ENCODE measurements at regions of chr1 and their contacts with region 1.

Region 1: GRCh38 chr1:23559136-23559984 is at the start of gene ID3:
- DNase-seq: peak; percentile 78 to 96
- H3K4me3 ChIP-seq: peak within 1 kb of the TSS; percentile 66 to 98 (median 94)
- H3K27ac ChIP-seq: peak within 1 kb of the TSS; percentile 64
- H3K4me1 ChIP-seq: peaks cover 22 to 36% (median 27%) of the 10 kb centered on the region in 4 experiments
- H3K27me3 ChIP-seq: peaks cover 0 to 4% (median 0%) of the 10 kb centered on the region in 4 experiments; a peak in 2 of 7 replicates
- CTCF ChIP-seq: no peak
- EP300 ChIP-seq: no peak; a peak in 1 of 3 replicates
- POLR2A ChIP-seq: peak; percentile 96 to 97
- RAD21 ChIP-seq: no peak; a peak in 1 of 4 replicates
- total RNA-seq, gene ID3: 240 and 252 TPM in 2 replicates

Region 2: GRCh38 chr1:23571465-23571864 is 12.1 kb after region 1 on chr1:
- CTCF ChIA-PET with region 1: interaction called, 18 read pairs
- POLR2A ChIA-PET with region 1: interaction called, 283 read pairs
- DNase-seq: no peak
- H3K4me3 ChIP-seq: no peak overlapping the region
- H3K27ac ChIP-seq: no peak overlapping the region
- H3K4me1 ChIP-seq: peaks cover 5 to 15% (median 9%) of the 10 kb centered on the region in 4 experiments
- H3K27me3 ChIP-seq: peaks cover 0 to 5% (median 0%) of the 10 kb centered on the region in 4 experiments; a peak in 3 of 7 replicates
- CTCF ChIP-seq: no peak
- EP300 ChIP-seq: no peak
- POLR2A ChIP-seq: no peak
- RAD21 ChIP-seq: no peak

Region 3: DNA sequence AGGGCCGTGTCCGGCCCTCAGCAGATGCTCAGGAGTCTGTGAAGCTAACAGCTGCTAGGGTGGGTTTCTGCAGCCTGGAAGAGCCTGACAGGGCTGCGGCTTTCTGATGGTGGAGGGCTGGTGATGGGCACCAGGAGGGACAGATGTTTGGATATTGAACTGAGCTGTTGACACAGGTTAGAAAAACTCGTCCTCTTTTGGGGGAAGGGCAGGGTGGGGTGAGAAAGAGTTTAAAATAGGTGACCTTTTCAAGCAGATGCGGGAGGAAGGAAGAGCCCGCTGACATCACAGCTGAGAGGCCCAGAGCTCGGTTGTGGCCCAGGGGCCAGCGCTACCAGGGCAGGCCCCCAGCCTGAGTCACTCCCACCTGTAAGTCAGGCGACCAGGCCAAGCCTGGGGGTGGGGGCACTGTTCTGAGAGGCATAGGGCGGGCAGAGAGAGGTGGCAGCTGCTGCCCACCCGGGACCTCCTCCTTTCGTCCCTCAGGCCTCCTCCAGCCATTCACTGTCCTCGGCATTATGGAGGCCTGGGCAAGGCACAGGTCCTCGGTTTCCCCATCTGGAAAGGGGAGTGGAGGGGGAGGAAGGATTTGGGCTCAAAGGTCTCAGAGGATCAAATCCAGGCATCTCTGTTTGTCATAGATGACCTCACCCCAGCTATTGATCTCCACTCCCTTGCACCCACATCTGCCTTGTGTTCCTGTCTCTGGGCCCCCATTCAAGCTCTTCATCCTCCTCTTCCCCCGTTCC is 32.3 kb after region 1 on chr1:
- CTCF ChIA-PET with region 1: interaction called, 14 read pairs
- POLR2A ChIA-PET with region 1: interaction called, 547 read pairs
- DNase-seq: no peak
- H3K4me3 ChIP-seq: no peak overlapping the region
- H3K27ac ChIP-seq: no peak overlapping the region
- H3K4me1 ChIP-seq: peaks cover under 1 to 19% (median 8%) of the 10 kb centered on the region in 4 experiments
- H3K27me3 ChIP-seq: no peaks in the 10 kb centered on the region; a peak in 1 of 7 replicates
- CTCF ChIP-seq: no peak
- EP300 ChIP-seq: no peak
- POLR2A ChIP-seq: no peak
- RAD21 ChIP-seq: no peak

Region 4: GRCh38 chr1:23627069-23627735 is 67.8 kb after region 1 on chr1:
- CTCF ChIA-PET with region 1: interaction called, 706 read pairs
- POLR2A ChIA-PET with region 1: interaction called, 155 read pairs
- DNase-seq: no peak
- H3K4me3 ChIP-seq: no peak overlapping the region
- H3K27ac ChIP-seq: no peak overlapping the region
- H3K4me1 ChIP-seq: peaks cover 0 to 5% (median 1%) of the 10 kb centered on the region in 4 experiments; a peak in 4 of 7 replicates
- H3K27me3 ChIP-seq: no peaks in the 10 kb centered on the region
- CTCF ChIP-seq: no peak
- EP300 ChIP-seq: no peak
- POLR2A ChIP-seq: no peak
- RAD21 ChIP-seq: no peak

Region 5: GRCh38 chr1:23657659-23658275 is 98.4 kb after region 1 on chr1:
- CTCF ChIA-PET with region 1: interaction called, 8 read pairs
- POLR2A ChIA-PET with region 1: interaction called, 10 read pairs
- DNase-seq: peak; percentile 50 to 91
- H3K4me3 ChIP-seq: no peak overlapping the region
- H3K27ac ChIP-seq: no peak overlapping the region
- H3K4me1 ChIP-seq: no peaks in the 10 kb centered on the region
- H3K27me3 ChIP-seq: no peaks in the 10 kb centered on the region
- CTCF ChIP-seq: peak; percentile 81 to 98 (median 90)
- EP300 ChIP-seq: no peak
- POLR2A ChIP-seq: no peak
- RAD21 ChIP-seq: peak; percentile 66 to 76